Activated CD4-positive, alpha-beta T cell treated with anti-CD3 and anti-CD28 coated beads, Interleukin-2, amount 10 ng/mL, durations not matched to agents 24 days and 14 days (primary cell): ENCODE measurements at regions of chr1 and their contacts with region 1.

Region 1: GRCh38 chr1:42924082-42924850 is 34.4 kb downstream of the SLC2A1 start:
- DNase-seq: peak; percentile 98
- H3K4me3 Mint-ChIP-seq: peak overlapping the region; percentile 84
- H3K27ac Mint-ChIP-seq: peak overlapping the region; percentile 91
- H3K4me1 Mint-ChIP-seq: peaks cover 44% of the 10 kb centered on the region
- H3K27me3 Mint-ChIP-seq: no peaks in the 10 kb centered on the region

Region 2: DNA sequence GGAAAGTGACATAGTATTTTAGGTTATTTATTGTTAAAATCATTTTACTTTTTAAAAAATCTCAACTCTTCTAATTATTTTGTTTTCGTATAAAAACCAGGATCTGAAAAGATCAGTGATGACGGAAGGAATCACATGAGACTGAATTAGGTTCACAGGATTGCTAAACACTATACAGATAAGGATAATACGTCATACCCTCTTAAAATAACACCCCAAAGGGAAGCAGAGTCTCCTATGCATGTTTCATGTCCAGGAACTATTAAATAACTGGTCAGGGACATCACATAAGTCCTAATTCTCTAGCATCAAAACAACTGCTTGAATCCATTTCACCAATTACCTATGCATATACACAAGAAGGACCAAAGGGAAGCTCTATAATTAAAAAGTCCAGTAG is 674.1 kb before region 1 on chr1:
- intact Hi-C with region 1: no loop called
- DNase-seq: no peak
- H3K4me3 Mint-ChIP-seq: no peak overlapping the region
- H3K27ac Mint-ChIP-seq: no peak overlapping the region
- H3K4me1 Mint-ChIP-seq: peaks cover 2% of the 10 kb centered on the region
- H3K27me3 Mint-ChIP-seq: no peaks in the 10 kb centered on the region

Region 3: GRCh38 chr1:42657971-42658879 is 266.0 kb before region 1 on chr1 and contains the start of gene PPIH:
- intact Hi-C with region 1: loop called (anchors 10 kb)
- DNase-seq: peak; percentile 99
- H3K4me3 Mint-ChIP-seq: peak within 1 kb of the TSS; percentile 97
- H3K27ac Mint-ChIP-seq: peak within 1 kb of the TSS; percentile 98
- H3K4me1 Mint-ChIP-seq: peaks cover 34% of the 10 kb centered on the region
- H3K27me3 Mint-ChIP-seq: peaks cover 4% of the 10 kb centered on the region
- total RNA-seq, gene PPIH: 88.4 and 92.9 TPM in 2 replicates

Region 4: DNA sequence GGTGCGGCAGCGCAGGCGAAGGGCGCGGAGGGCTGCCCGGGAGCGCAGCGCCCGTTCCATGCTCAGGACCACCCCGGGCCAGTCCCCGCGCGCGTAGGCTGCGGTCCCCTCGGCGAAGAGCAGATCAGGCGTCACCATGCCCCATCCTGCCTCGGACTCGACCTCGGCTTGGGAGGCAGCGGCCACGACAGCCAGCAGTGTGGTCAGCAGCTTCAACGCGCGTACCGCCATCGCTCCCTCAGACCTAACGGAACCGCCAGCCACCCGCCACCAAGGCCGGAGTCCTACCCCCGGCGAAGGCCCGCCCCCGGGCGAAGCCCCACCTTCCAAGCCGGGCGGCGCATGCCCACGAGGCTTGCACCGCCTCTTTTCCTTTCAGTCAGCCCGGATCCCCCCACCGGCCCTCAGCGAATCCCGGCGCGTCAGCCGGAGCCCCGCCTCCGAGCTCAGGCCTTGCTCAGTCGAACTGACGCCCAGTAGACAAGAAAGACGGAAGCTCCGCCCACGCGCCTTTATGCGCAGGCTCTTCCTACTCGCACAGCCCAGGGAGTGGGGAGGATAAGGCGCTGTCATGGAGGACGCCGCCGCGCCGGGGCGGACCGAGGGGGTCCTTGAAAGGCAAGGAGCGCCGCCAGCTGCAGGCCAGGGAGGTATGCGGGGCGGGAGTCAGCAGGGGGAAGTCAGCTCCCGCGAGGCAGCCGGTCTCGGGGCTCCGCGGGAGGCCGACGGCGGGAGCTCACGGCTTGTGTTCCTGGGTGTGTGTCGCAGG is 157.3 kb before region 1 on chr1 and contains the starts of genes C1orf50 and P3H1:
- intact Hi-C with region 1: loop called (anchors 5 kb)
- DNase-seq: peak; percentile 100
- H3K4me3 Mint-ChIP-seq: no peak within 1 kb of the TSS
- H3K27ac Mint-ChIP-seq: peak within 1 kb of the TSS; percentile 93
- H3K4me1 Mint-ChIP-seq: peaks cover 25% of the 10 kb centered on the region
- H3K27me3 Mint-ChIP-seq: no peaks in the 10 kb centered on the region
- total RNA-seq, gene C1orf50: 6.2 and 6.3 TPM in 2 replicates
- total RNA-seq, gene P3H1: 47.4 and 51.1 TPM in 2 replicates

Region 5: GRCh38 chr1:42816585-42817434 is 107.5 kb before region 1 on chr1 and contains the starts of genes ERMAP and SVBP:
- intact Hi-C with region 1: no loop called
- DNase-seq: peak; percentile 97
- H3K4me3 Mint-ChIP-seq: peak within 1 kb of the TSS; percentile 82
- H3K27ac Mint-ChIP-seq: peak within 1 kb of the TSS; percentile 83
- H3K4me1 Mint-ChIP-seq: peaks cover 17% of the 10 kb centered on the region
- H3K27me3 Mint-ChIP-seq: no peaks in the 10 kb centered on the region
- total RNA-seq, gene ERMAP: 3.5 and 3.8 TPM in 2 replicates
- total RNA-seq, gene SVBP: 7.3 and 10.0 TPM in 2 replicates

Region 6: GRCh38 chr1:42860339-42861013 is 63.8 kb before region 1 on chr1:
- intact Hi-C with region 1: no loop called
- DNase-seq: no peak
- H3K4me3 Mint-ChIP-seq: no peak overlapping the region
- H3K27ac Mint-ChIP-seq: no peak overlapping the region
- H3K4me1 Mint-ChIP-seq: no peaks in the 10 kb centered on the region
- H3K27me3 Mint-ChIP-seq: peaks cover 18% of the 10 kb centered on the region

Region 7: DNA sequence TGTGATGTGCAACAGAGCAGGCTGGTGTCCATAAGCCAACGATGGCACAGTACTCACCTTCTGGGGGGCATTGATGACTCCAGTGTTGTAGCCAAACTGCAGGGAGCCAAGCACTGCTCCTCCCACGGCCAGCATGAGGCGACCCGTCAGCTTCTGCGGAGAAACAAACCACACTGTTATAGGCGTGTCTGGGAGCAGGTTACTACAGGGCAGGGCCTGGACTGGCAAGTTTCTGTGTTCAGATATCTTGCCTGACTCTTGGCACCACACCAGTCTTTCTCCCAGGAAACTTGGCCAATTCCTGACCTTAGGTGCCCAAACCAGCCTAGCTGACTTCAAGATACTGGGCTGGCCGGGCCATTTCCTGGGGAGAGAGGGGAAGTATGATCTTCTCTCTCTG is 18.9 kb after region 1 on chr1:
- intact Hi-C with region 1: loop called (anchors 1 kb)
- DNase-seq: peak; percentile 79
- H3K4me3 Mint-ChIP-seq: peak overlapping the region; percentile 68
- H3K27ac Mint-ChIP-seq: peak overlapping the region; percentile 88
- H3K4me1 Mint-ChIP-seq: peaks cover 89% of the 10 kb centered on the region
- H3K27me3 Mint-ChIP-seq: no peaks in the 10 kb centered on the region

Region 8: DNA sequence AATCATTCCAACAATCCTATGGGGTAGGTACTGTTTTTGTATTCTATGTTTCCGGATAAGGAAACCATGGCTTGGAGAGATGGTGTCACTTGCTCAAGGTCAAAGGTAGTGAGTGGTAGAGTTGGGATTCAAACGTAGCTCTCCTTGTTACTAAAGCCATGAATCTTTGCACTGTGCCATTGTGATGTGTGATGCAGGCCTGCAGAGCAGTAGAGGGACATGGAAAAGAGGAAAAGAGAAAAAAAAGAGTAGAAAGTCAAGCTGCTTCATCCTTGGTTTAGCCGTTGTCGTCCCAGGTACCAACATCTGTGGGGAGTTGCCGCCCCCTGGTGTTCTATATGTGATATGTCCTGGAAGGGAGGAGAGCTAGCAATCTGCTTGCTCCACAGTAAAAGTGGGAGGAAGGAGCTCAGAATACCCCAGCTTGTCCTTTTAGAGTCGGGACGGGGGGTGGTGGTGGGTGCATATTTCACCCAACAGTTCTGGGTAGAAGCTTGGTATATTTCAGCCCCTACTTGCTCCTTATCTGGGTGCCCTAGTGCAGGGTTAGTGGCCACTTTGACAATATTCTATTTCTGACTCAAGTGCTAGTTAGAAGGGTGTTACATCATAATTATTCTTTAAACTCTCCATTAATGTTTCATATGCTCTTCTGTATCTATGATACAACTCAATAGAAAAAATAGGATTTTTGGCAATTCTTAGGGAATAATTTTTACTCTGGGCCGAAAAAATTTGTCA is 149.4 kb after region 1 on chr1:
- intact Hi-C with region 1: loop called (anchors 1 kb)
- DNase-seq: peak; percentile 92
- H3K4me3 Mint-ChIP-seq: no peak overlapping the region
- H3K27ac Mint-ChIP-seq: no peak overlapping the region
- H3K4me1 Mint-ChIP-seq: peaks cover 2% of the 10 kb centered on the region
- H3K27me3 Mint-ChIP-seq: peaks cover 7% of the 10 kb centered on the region